Endothelial cell of umbilical vein (primary cell): ENCODE measurements at regions of chr11 and their contacts with region 1.

Region 1: DNA sequence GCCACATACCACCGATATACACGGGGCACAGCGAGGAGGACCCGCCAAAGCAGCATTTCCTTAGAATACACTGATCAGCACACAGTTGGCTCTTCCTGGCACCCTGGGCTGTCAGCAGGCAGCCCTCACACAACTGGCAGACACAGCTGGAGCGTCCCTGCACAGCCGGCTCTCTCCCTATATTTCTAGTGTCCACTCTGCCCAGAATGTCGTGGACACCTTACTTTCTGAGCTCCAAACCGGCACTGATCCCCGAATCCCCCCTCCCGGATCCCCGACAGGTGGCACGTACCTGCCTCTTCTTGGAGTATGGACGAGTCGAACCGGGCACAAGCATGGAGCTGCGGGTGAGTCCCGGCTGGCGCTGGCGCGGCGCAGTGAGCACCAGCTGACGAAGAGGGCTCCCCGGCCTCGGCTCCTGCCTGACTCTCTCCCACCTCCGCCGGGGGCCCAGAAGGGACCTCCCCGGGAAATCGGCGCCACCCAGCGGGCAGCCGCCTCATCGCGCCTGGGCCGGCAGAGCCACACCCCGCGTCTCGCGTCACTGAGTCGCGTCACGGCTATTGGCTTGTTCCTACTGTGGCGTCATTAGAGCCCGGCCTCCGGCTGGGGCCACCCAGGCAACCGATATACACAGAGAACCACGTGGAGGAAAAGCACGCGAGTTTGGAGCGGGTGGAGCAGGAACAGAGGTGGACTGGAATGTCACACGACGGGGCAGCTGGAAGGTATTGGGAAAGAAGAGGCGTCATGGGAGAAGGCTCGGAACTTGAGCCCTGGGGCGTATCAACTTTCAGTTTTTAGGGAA is at the start of gene USP2:
- DNase-seq: peak; percentile 95
- H3K4me3 ChIP-seq: peak within 1 kb of the TSS in 2 of 3 experiments; percentile 41 to 51
- H3K27ac ChIP-seq: no peak within 1 kb of the TSS
- H3K4me1 ChIP-seq: peaks cover 10% of the 10 kb centered on the region
- H3K27me3 ChIP-seq: peaks cover 7 to 14% of the 10 kb centered on the region in 2 experiments
- CTCF ChIP-seq: peak; percentile 92
- POLR2A ChIP-seq: no peak
- total RNA-seq, gene USP2: 1.1 and 1.2 TPM in 2 replicates

Region 2: GRCh38 chr11:119121008-119121810 is 260.2 kb before region 1 on chr11 and contains the start of gene HINFP:
- CTCF ChIA-PET with region 1: no interaction called
- POLR2A ChIA-PET with region 1: no interaction called
- dilution Hi-C with region 1: no loop called
- intact Hi-C with region 1: no loop called
- DNase-seq: peak; percentile 100
- H3K4me3 ChIP-seq: peak within 1 kb of the TSS; percentile 62 to 93 (median 85)
- H3K27ac ChIP-seq: peak within 1 kb of the TSS; percentile 4
- H3K4me1 ChIP-seq: peaks cover 11% of the 10 kb centered on the region
- H3K27me3 ChIP-seq: no peaks in the 10 kb centered on the region
- CTCF ChIP-seq: no peak
- POLR2A ChIP-seq: peak; percentile 97
- total RNA-seq, gene HINFP: 32.6 and 33.4 TPM in 2 replicates

Region 3: DNA sequence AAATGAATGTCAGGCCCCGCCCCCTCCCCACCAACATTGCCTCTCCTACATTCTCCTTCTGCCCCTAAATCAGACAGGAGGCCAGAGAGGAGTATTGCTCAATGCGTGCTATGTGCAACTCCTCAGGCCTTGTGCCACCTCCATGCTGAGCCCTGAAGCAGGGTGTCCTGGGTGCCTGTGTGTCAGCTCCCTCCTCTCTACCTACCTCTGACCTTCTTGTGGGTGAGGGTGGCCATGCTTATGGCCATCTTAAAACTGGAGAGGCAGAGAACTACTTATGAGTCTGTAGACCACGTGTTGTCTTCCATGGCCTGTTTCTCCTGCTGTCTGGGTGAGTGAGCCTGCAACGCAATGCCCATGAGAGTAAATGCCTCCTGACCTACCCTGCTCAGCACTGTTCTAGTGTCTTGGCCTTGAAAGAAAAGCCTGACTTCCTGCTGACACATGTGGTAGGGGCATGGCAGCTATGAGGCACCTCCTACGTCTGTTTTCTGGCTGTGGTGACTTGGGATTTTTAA is 75.0 kb before region 1 on chr11:
- CTCF ChIA-PET with region 1: no interaction called
- POLR2A ChIA-PET with region 1: no interaction called
- dilution Hi-C with region 1: no loop called
- intact Hi-C with region 1: no loop called
- DNase-seq: peak; percentile 39
- H3K4me3 ChIP-seq: no peak overlapping the region
- H3K27ac ChIP-seq: no peak overlapping the region
- H3K4me1 ChIP-seq: peaks cover 2% of the 10 kb centered on the region
- H3K27me3 ChIP-seq: no peaks in the 10 kb centered on the region
- CTCF ChIP-seq: no peak
- POLR2A ChIP-seq: no peak

Region 4: GRCh38 chr11:119363851-119364590 is 17.4 kb before region 1 on chr11:
- CTCF ChIA-PET with region 1: interaction called, 11 read pairs
- POLR2A ChIA-PET with region 1: no interaction called
- dilution Hi-C with region 1: no loop called
- intact Hi-C with region 1: no loop called
- DNase-seq: peak; percentile 39
- H3K4me3 ChIP-seq: peak overlapping the region in 1 of 3 experiments; percentile 33
- H3K27ac ChIP-seq: no peak overlapping the region
- H3K4me1 ChIP-seq: no peaks in the 10 kb centered on the region
- H3K27me3 ChIP-seq: peaks cover 12 to 20% of the 10 kb centered on the region in 2 experiments
- CTCF ChIP-seq: no peak
- POLR2A ChIP-seq: no peak

Region 5: GRCh38 chr11:119474682-119475596 is 93.6 kb after region 1 on chr11:
- CTCF ChIA-PET with region 1: interaction called, 11 read pairs
- POLR2A ChIA-PET with region 1: no interaction called
- dilution Hi-C with region 1: no loop called
- intact Hi-C with region 1: loop called (anchors 1 kb)
- DNase-seq: peak; percentile 47
- H3K4me3 ChIP-seq: no peak overlapping the region
- H3K27ac ChIP-seq: no peak overlapping the region
- H3K4me1 ChIP-seq: no peaks in the 10 kb centered on the region
- H3K27me3 ChIP-seq: peaks cover 0 to 2% of the 10 kb centered on the region in 2 experiments
- CTCF ChIP-seq: peak; percentile 79 to 83
- POLR2A ChIP-seq: no peak